GM12878 (cell line): ENCODE measurements at regions of chr1 and their contacts with region 1.

Region 1: GRCh38 chr1:171781176-171781875 is at the start of gene METTL13:
- DNase-seq: peak; percentile 96
- ATAC-seq: peak; percentile 99
- H3K4me3 ChIP-seq: peak within 1 kb of the TSS; percentile 93
- H3K27ac ChIP-seq: peak within 1 kb of the TSS; percentile 82
- H3K4me1 ChIP-seq: peaks cover 10% of the 10 kb centered on the region; the same call in 1 of the 2 replicates
- H3K27me3 ChIP-seq: no peaks in the 10 kb centered on the region
- CTCF ChIP-seq: no peak
- EP300 ChIP-seq: no peak
- POLR2A ChIP-seq: peak; percentile 96
- RAD21 ChIP-seq: no peak
- polyA plus RNA-seq, gene METTL13: 12.2 to 16.8 TPM

Region 2: DNA sequence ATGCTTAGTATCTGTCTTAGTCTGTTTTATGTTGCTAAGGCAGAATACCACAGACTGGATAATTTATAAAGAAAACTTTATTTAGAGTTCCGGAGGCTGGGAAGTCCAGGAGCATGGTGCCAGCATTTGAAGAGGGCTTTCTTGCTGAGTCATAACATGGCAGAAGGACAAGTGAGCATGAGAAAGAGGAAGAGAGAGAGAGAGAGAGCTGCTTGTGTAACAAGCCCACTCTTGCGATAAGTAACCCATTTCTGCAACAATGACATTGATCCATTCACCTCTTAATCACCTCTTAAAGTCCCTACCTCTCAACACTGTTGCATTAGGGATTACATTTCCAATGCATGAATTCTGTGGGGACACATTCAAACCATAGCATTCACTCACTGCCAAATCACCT is 170.9 kb before region 1 on chr1:
- CTCF ChIA-PET with region 1: no interaction called
- POLR2A ChIA-PET with region 1: no interaction called
- RAD21 ChIA-PET with region 1: no interaction called
- SMC1A ChIA-PET with region 1: no interaction called
- in situ Hi-C with region 1: no loop called
- intact Hi-C with region 1: loop called (anchors 5 kb)
- DNase-seq: no peak
- ATAC-seq: peak; percentile 74
- H3K4me3 ChIP-seq: no peak overlapping the region
- H3K27ac ChIP-seq: no peak overlapping the region
- H3K4me1 ChIP-seq: peaks cover 5% of the 10 kb centered on the region
- H3K27me3 ChIP-seq: no peaks in the 10 kb centered on the region
- CTCF ChIP-seq: no peak
- EP300 ChIP-seq: peak; percentile 38 to 68; a peak in 3 of 4 replicates
- POLR2A ChIP-seq: no peak
- RAD21 ChIP-seq: no peak

Region 3: GRCh38 chr1:171741872-171742576 is 39.3 kb before region 1 on chr1 and contains the start of gene VAMP4:
- CTCF ChIA-PET with region 1: interaction called, 6 read pairs
- POLR2A ChIA-PET with region 1: interaction called, 18 read pairs
- RAD21 ChIA-PET with region 1: no interaction called
- SMC1A ChIA-PET with region 1: interaction called, 7 read pairs
- in situ Hi-C with region 1: no loop called
- intact Hi-C with region 1: loop called (anchors 1 kb)
- DNase-seq: peak; percentile 59
- ATAC-seq: peak; percentile 95
- H3K4me3 ChIP-seq: peak within 1 kb of the TSS; percentile 83
- H3K27ac ChIP-seq: peak within 1 kb of the TSS; percentile 92
- H3K4me1 ChIP-seq: peaks cover 4% of the 10 kb centered on the region
- H3K27me3 ChIP-seq: no peaks in the 10 kb centered on the region
- CTCF ChIP-seq: no peak
- EP300 ChIP-seq: no peak
- POLR2A ChIP-seq: peak; percentile 91
- RAD21 ChIP-seq: no peak
- polyA plus RNA-seq, gene VAMP4: 0.90 to 1.5 TPM

Region 4: GRCh38 chr1:171817511-171818265 is 36.4 kb after region 1 on chr1:
- CTCF ChIA-PET with region 1: no interaction called
- POLR2A ChIA-PET with region 1: no interaction called
- RAD21 ChIA-PET with region 1: no interaction called
- SMC1A ChIA-PET with region 1: no interaction called
- in situ Hi-C with region 1: no loop called
- intact Hi-C with region 1: no loop called
- DNase-seq: no peak
- ATAC-seq: peak; percentile 76
- H3K4me3 ChIP-seq: no peak overlapping the region
- H3K27ac ChIP-seq: no peak overlapping the region
- H3K4me1 ChIP-seq: no peaks in the 10 kb centered on the region
- H3K27me3 ChIP-seq: no peaks in the 10 kb centered on the region
- CTCF ChIP-seq: no peak
- EP300 ChIP-seq: no peak
- POLR2A ChIP-seq: no peak
- RAD21 ChIP-seq: no peak

Region 5: DNA sequence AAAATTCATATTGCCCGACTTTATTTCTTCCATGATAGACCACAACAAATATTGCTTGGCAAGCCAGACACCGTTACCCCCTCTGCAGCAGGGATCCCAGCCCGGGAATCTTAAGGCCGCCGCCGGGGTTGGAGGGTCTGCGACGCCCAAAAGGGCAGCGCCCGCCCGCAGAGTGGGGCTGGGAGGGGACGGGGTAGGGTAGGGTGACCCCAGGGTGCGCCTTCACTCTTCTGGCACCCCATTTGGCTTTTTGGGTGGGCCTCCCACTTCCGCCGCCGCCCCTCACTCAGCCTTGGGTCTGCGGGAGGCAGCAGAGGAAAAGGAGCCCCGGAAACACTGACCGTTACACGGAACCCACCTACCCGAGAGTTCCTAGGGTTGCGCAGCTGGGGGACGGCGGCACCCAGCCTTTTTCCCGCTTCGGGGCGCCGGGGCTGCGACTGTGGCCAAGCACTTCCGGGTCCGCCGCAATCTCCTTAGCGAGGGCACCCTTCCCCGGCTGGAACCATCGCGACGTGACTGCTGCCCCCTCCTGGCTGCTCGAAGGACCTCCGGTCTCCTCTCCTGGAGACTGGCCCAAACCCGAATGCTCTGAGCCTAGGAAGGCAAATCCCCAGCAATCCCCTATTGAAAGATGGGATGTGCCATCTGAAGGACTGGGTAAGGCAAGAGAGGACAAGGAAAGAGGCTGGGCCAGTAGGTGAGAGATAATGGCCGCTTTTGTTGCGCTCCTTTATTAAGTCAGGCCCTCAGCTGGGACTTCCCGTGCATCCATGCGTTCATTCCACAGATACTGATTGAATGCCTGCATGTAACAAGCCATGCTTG is 662.5 kb after region 1 on chr1 and contains the start of gene PIGC:
- CTCF ChIA-PET with region 1: no interaction called
- POLR2A ChIA-PET with region 1: no interaction called
- RAD21 ChIA-PET with region 1: interaction called, 3 read pairs
- SMC1A ChIA-PET with region 1: no interaction called
- in situ Hi-C with region 1: loop called (anchors 25 kb)
- intact Hi-C with region 1: no loop called
- DNase-seq: peak; percentile 59
- ATAC-seq: peak; percentile 99
- H3K4me3 ChIP-seq: peak within 1 kb of the TSS; percentile 94
- H3K27ac ChIP-seq: peak within 1 kb of the TSS; percentile 82
- H3K4me1 ChIP-seq: no peaks in the 10 kb centered on the region
- H3K27me3 ChIP-seq: no peaks in the 10 kb centered on the region
- CTCF ChIP-seq: peak; percentile 89 to 93 (median 91)
- EP300 ChIP-seq: no peak
- POLR2A ChIP-seq: peak; percentile 91
- RAD21 ChIP-seq: peak; percentile 73
- polyA plus RNA-seq, gene PIGC: 23.3 to 29.7 TPM